IMR-90 (cell line): ENCODE measurements at regions of chr2 and their contacts with region 1.

Region 1: DNA sequence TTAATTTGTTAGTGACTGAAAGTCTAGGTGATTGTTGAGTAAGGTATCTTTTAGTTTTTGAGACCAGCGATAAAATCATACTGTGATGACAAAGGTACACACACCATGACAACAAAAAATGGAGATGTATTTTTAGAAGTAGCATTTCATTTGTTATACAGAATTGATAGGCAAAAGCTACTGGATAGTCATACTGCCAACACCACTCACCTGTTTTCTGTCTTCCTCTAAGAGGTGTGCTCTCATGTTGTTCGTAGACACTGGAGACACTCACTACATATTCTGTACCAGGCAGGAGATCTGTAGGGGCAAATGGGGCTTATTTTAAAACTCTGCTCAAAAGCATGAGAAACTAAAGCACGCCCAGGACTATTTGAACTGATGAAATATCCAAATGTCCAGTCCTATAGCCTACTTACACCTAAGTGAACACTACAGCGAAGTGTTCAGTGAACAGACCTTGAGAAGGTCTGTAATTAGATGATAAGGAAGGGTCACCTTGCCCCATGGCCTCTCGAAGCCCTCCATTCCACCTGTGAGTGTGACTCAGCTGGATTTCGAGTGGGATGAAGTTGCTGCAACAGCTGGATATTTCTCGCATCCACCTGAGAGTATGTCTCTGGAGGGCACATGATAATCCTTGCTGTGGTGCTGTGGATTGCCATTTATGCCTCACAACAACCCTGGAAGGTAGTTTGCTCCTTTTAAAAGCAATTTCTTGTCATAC is 47.7 kb downstream of the FN1 start:
- DNase-seq: no peak
- ATAC-seq: no peak
- H3K4me3 ChIP-seq: no peak overlapping the region
- H3K27ac ChIP-seq: 0 out of 2 replicates have a peak overlapping the region, but pooled peaks have one; percentile 3
- H3K4me1 ChIP-seq: no peaks in the 10 kb centered on the region
- H3K27me3 ChIP-seq: no peaks in the 10 kb centered on the region
- CTCF ChIP-seq: no peak
- POLR2A ChIP-seq: 0 out of 2 replicates have a peak, but pooled peaks have one; percentile 42
- RAD21 ChIP-seq: no peak

Region 2: DNA sequence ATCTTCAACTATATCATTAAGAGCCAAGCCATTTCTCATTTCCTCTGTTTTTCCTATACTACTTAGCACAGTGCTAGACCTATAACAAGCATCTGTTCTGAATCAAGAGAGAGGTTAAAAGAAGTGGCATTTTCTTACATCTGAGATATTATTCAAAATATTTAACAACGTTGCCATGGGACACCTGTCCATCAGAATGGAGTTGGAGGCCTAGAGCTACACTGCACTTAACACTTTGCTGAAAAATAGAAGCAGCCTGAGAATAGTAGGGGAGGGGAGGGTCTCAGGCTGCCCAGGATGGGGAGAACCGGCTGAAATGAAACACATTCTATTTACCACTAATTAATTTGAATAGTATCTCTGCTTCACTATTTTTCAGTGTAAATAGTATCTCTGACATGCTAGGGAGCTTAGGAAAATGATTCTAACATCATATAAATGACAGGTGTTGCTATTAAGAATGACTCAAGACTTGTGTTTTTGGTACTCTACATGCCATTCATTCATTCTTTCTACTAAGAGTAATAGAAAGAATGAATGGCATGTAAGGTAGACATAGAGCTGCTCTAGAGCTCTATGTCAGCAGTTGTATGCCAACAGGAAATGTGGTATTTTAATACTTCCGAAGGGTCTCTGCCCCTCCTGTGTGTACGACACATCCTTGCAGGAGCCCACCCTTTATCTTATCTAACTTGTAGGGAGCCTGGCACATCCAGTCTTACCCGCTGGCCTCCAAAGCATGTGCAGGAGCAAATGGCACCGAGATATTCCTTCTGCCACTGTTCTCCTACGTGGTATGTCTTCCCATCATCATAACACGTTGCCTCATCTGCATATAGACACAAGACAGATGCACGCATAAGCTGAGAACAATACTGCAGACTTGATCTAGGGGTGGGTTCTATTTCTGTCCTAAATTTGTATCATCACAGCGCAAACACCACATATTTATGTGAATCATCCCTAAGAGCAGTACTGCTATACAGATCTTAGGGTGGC is 23.7 kb before region 1 on chr2:
- CTCF ChIA-PET with region 1: no interaction called
- POLR2A ChIA-PET with region 1: interaction called, 10 read pairs
- dilution Hi-C with region 1: no loop called
- in situ Hi-C with region 1: no loop called
- intact Hi-C with region 1: no loop called
- DNase-seq: peak; percentile 17
- ATAC-seq: no peak
- H3K4me3 ChIP-seq: no peak overlapping the region
- H3K27ac ChIP-seq: no peak overlapping the region
- H3K4me1 ChIP-seq: peaks cover 3% of the 10 kb centered on the region; the same call in 1 of the 2 replicates
- H3K27me3 ChIP-seq: no peaks in the 10 kb centered on the region
- CTCF ChIP-seq: no peak
- POLR2A ChIP-seq: no peak; the same call in 1 of the 2 replicates
- RAD21 ChIP-seq: no peak

Region 3: DNA sequence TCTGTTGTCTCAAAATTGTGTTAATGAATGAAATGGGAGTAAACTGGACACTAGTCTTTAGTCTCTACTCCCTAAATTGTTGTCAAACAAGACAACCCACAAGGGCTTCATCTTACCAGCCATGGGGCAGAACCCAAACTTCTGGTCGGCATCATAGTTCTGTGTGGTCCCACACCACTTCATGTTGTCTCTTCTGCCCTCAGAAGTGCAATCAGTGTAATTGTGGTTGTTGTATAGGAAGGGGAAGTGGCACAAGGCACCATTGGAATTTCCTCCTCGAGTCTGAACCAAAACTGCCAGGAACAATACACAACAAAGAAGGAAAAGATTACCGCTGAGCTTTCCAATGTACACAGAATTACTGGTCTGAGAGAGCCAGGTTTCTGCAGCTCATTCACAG is 35.1 kb after region 1 on chr2:
- CTCF ChIA-PET with region 1: no interaction called
- POLR2A ChIA-PET with region 1: no interaction called
- dilution Hi-C with region 1: no loop called
- in situ Hi-C with region 1: no loop called
- intact Hi-C with region 1: loop called (anchors 5 kb)
- DNase-seq: no peak
- ATAC-seq: no peak
- H3K4me3 ChIP-seq: no peak overlapping the region
- H3K27ac ChIP-seq: peak overlapping the region; percentile 45; the same call in 1 of the 2 replicates
- H3K4me1 ChIP-seq: peaks cover 10% of the 10 kb centered on the region
- H3K27me3 ChIP-seq: no peaks in the 10 kb centered on the region
- CTCF ChIP-seq: no peak
- POLR2A ChIP-seq: no peak
- RAD21 ChIP-seq: no peak